ENCODE measurements at regions of chr5 and their contacts with region 1.

Region 1: DNA sequence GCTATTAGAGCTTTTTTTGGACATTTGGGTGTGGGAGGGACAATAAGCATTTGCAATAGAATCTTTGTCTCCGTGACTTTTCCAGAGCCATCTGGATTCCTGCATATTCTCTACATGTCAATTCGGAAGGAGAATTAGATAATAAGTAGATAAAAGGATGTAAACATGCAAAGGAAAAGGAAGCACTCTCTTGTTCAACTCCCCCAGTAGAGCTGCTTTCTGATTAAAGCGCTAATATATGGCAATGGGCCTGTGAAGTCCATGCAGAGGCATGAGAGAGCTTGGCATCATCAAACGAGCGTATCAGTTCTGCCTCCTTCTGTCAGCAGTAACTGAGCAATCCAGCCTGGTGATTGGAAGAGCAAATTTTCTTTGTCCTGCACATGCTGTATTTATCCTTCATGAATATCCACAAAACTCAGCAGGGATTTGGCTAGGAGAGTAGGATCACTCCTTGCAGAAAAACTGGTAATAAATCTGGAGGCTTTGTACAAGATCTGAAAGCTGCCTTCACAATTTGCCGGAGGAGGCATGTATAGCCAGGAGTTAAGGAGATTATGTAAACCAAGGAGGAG is 1752.9 kb downstream of the MAT2B start:
- DNase-seq: no peak
- H3K4me3 ChIP-seq: no peak overlapping the region
- H3K27ac ChIP-seq: no peak overlapping the region
- H3K4me1 ChIP-seq: no peaks in the 10 kb centered on the region
- H3K27me3 ChIP-seq: no peaks in the 10 kb centered on the region
- CTCF ChIP-seq: no peak

Region 2: DNA sequence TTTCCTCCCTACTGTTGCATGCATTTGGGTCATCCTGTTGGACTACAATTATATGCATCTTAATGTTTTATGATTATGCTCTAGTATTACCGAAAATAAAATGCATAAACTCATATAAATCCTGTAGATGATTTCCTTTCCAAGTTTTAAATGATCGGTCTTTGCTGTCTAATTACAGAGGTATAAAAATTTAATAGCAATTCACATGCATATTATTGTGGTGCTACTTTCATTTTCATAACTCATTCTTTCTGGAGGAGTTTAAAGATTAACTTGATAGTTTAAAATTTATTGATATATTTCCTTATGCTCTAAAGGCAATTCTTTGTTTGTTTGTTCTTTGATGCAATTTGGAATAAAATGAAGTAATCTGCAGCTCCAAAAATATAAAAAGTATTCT is 277.8 kb before region 1 on chr5:
- CTCF ChIA-PET with region 1: no interaction called
- dilution Hi-C with region 1: no loop called
- in situ Hi-C with region 1: no loop called
- intact Hi-C with region 1: no loop called
- DNase-seq: no peak
- H3K4me3 ChIP-seq: no peak overlapping the region
- H3K27ac ChIP-seq: no peak overlapping the region
- H3K4me1 ChIP-seq: peaks cover 4% of the 10 kb centered on the region
- H3K27me3 ChIP-seq: no peaks in the 10 kb centered on the region
- CTCF ChIP-seq: no peak

Region 3: GRCh38 chr5:165448753-165449152 is 190.5 kb after region 1 on chr5:
- CTCF ChIA-PET with region 1: no interaction called
- dilution Hi-C with region 1: no loop called
- in situ Hi-C with region 1: loop called in 1 of 2 experiments (anchors 25 kb)
- intact Hi-C with region 1: no loop called
- DNase-seq: no peak
- H3K4me3 ChIP-seq: no peak overlapping the region
- H3K27ac ChIP-seq: no peak overlapping the region
- H3K4me1 ChIP-seq: no peaks in the 10 kb centered on the region
- H3K27me3 ChIP-seq: no peaks in the 10 kb centered on the region
- CTCF ChIP-seq: no peak